ENCODE measurements at regions of chr20 and their contacts with region 1.

Region 1: GRCh38 chr20:52090036-52090435 is 101.5 kb downstream of the ZFP64 start:
- DNase-seq: no peak
- H3K4me3 ChIP-seq: no peak overlapping the region
- CTCF ChIP-seq: no peak
- POLR2A ChIP-seq: no peak

Region 2: GRCh38 chr20:51732096-51732791 is 357.8 kb before region 1 on chr20:
- intact Hi-C with region 1: no loop called
- DNase-seq: no peak
- H3K4me3 ChIP-seq: no peak overlapping the region
- CTCF ChIP-seq: no peak
- POLR2A ChIP-seq: no peak

Region 3: GRCh38 chr20:51840631-51841264 is 249.3 kb before region 1 on chr20:
- intact Hi-C with region 1: no loop called
- DNase-seq: no peak
- H3K4me3 ChIP-seq: no peak overlapping the region
- CTCF ChIP-seq: no peak
- POLR2A ChIP-seq: no peak

Region 4: DNA sequence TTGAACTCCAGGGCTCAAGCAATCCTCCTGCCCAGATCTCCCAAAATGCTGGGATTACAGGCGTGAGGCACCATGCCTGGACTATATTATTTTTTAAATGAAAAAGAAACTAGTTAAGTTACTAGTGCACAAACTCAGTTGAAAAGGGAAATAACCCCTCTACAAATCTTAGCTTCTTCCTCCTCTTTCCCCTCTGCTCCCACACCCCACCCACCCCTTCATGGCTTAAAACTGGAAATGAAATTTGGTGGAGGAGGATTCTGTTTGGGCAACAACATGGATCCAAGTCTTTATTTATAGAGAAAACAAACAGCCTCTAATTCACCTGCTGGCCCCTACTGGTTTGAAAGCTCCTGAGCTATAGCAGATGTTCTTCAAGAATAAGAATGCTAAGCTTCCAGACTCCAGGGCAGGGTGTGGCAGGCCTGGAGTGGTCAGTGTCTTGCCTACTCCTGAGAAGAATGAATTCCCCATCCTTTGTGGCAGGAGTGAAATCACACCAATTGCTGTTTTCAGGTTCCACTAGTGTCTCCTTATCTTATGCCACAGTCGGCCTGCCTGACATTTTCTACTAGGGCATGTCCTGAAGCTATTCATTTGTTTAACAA is 28.1 kb after region 1 on chr20:
- intact Hi-C with region 1: loop called (anchors 2 kb)
- DNase-seq: no peak
- H3K4me3 ChIP-seq: no peak overlapping the region
- CTCF ChIP-seq: no peak
- POLR2A ChIP-seq: no peak

Region 5: DNA sequence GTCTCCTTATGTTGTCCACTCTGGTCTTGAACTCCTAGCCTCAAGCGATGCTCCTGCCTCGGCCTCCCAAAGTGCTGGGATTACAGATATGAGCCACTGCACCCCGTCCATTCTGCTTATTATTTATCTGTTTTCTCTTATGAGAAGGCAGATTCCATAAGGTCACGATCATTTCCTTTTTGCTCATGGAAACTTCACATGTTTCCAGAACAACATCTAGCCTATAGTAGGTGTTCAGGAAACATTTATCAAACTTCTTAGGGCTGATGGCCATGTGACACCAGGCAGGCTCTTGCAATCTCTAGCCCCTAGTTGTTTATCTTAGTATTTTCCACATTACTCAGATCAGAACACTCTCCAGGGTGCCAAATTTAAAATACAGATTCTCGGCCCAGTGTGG is 40.4 kb after region 1 on chr20:
- intact Hi-C with region 1: no loop called
- DNase-seq: no peak
- H3K4me3 ChIP-seq: no peak overlapping the region
- CTCF ChIP-seq: no peak
- POLR2A ChIP-seq: no peak

Region 6: GRCh38 chr20:52372169-52372568 is 282.1 kb after region 1 on chr20:
- intact Hi-C with region 1: no loop called
- DNase-seq: no peak
- H3K4me3 ChIP-seq: no peak overlapping the region
- CTCF ChIP-seq: no peak
- POLR2A ChIP-seq: no peak